ENCODE measurements at regions of chr17 and their contacts with region 1.

Region 1: DNA sequence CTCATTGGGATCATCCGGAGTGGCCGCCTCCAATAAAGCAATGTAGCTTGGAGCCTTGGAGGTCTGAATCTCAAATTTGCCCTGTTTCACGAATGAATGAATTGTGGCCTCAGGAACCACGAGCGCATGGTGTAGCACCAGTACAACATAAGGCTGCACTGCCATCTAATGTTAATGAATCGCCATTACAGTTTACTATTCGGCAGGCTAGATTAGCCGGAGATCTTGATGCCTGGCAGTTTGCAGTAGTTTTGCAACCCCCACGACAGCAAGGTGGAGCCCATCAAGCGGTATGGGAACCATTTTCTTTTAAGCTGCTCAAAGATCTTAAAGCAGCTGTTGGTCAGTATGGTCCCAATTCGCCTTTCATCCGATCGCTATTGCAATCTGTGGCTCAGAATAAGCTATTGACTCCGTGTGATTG is 18.8 kb downstream of the ALOX15B start:
- DNase-seq: peak; percentile 83
- ATAC-seq: peak; percentile 94
- H3K4me3 ChIP-seq: no peak overlapping the region
- H3K27ac ChIP-seq: no peak overlapping the region
- H3K4me1 ChIP-seq: peaks cover 0 to 20% of the 10 kb centered on the region in 2 experiments; a peak in 3 of 4 replicates
- H3K27me3 ChIP-seq: no peaks in the 10 kb centered on the region
- CTCF ChIP-seq: peak; percentile 65 to 89 (median 77)
- POLR2A ChIP-seq: no peak
- RAD21 ChIP-seq: peak; percentile 93

Region 2: GRCh38 chr17:7740481-7741001 is 317.2 kb before region 1 on chr17:
- CTCF ChIA-PET with region 1: interaction called, 5 read pairs
- POLR2A ChIA-PET with region 1: no interaction called
- RAD21 ChIA-PET with region 1: no interaction called
- intact Hi-C with region 1: loop called (anchors 2 kb)
- DNase-seq: no peak
- ATAC-seq: no peak
- H3K4me3 ChIP-seq: no peak overlapping the region
- H3K27ac ChIP-seq: no peak overlapping the region
- H3K4me1 ChIP-seq: peaks cover 4 to 8% of the 10 kb centered on the region in 2 experiments; a peak in 3 of 4 replicates
- H3K27me3 ChIP-seq: no peaks in the 10 kb centered on the region
- CTCF ChIP-seq: no peak
- POLR2A ChIP-seq: no peak
- RAD21 ChIP-seq: no peak

Region 3: DNA sequence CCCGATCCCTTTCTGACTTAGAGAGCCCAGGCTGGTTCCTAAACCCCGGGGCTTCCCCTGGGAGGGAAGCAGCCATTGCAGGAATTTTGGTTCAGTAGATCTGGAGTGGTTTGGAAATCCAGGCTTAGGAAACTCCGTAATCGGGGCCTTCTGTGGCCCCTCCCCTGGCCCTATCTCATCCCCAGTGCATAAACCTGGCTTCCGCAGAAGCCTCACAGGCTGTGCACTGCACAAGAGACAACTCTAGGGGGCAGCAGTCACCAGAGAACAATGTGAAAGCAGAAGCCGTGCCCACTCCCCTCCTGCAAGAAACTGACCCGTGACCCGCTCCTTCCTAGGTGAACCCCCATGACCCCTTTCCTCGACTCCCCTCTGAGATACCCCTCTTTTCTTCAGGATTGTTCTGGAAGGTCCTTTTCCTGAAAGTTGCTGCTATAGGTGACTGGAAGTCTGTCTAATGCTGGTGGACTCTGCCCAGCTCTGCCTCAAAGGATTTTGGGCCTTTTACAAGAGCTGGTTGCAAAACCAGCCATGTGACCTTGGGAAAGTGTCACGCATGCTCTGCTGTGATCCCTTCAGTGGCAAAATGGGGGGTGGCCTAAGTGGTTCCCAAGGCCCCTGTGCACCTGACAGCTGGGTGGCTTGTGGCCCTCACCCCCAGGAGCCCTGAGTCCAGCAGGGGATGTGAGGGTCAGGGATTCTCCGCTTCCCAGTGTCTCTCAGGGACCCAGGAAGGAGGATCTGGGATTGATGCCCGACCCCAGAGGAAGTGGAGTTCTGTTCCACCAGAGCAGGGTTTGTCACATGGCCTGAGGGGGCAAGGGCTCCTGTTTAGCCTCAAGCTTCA is 40.8 kb before region 1 on chr17:
- CTCF ChIA-PET with region 1: interaction called, 19 read pairs
- POLR2A ChIA-PET with region 1: no interaction called
- RAD21 ChIA-PET with region 1: no interaction called
- intact Hi-C with region 1: no loop called
- DNase-seq: no peak
- ATAC-seq: peak; percentile 87
- H3K4me3 ChIP-seq: peak overlapping the region; percentile 50 to 65
- H3K27ac ChIP-seq: peak overlapping the region; percentile 48; the same call in 1 of the 2 replicates
- H3K4me1 ChIP-seq: peaks cover 8 to 45% of the 10 kb centered on the region in 2 experiments; a peak in 3 of 4 replicates
- H3K27me3 ChIP-seq: no peaks in the 10 kb centered on the region
- CTCF ChIP-seq: peak; percentile 74 to 88 (median 86)
- POLR2A ChIP-seq: no peak
- RAD21 ChIP-seq: peak; percentile 80

Region 4: DNA sequence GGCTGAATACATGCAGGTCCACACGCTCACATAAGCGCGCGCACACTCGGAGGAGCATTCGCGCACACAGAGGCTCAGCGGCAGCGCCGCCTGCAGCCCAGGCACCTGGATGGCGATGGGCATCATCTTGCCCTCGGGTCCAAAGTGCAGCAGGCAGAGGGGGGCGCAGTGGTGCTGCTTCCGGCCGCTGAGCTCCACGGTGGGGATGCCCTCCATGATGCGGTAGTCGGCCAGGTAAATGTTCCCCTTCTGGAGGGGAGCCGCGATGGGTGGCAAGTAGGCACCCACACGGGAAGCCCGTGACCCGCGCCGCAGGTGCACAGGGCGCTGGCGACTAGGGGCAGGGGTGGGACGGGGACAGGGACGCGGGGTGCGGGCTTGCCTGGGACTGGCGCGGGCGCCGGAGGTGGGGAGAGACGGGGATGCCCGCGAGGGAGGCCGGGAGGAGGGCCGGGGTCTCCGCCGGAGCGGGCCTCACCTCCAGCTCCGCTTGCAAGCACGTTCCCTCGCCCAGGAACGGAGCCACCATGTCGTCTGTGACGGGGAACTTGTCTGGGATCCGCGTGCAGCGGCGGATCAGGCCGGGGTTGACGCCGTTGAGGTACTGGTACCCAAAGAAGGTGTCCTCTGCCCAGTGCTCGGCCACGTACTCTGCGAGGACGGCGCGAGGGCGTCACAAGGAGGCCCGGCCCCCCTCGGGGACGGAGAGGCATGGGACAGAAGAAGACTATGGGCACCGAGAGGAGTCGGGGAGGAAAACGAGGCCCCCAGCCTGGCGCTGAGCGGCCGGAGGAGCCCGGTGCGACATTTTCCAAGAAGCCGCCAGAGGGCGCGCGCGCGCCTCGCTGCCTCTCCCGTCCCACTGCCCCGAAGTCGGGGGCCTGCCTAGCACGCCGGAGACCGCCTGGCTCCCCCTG is 21.8 kb after region 1 on chr17:
- CTCF ChIA-PET with region 1: interaction called, 29 read pairs
- POLR2A ChIA-PET with region 1: no interaction called
- RAD21 ChIA-PET with region 1: no interaction called
- intact Hi-C with region 1: no loop called
- DNase-seq: peak; percentile 72
- ATAC-seq: peak; percentile 88
- H3K4me3 ChIP-seq: peak overlapping the region; percentile 68 to 81
- H3K27ac ChIP-seq: peak overlapping the region; percentile 79
- H3K4me1 ChIP-seq: peaks cover 2 to 25% of the 10 kb centered on the region in 2 experiments; a peak in 3 of 4 replicates
- H3K27me3 ChIP-seq: no peaks in the 10 kb centered on the region
- CTCF ChIP-seq: peak; percentile 84 to 98 (median 86)
- POLR2A ChIP-seq: no peak
- RAD21 ChIP-seq: peak; percentile 79

Region 5: GRCh38 chr17:8118769-8119580 is 61.3 kb after region 1 on chr17:
- CTCF ChIA-PET with region 1: interaction called, 12 read pairs
- POLR2A ChIA-PET with region 1: no interaction called
- RAD21 ChIA-PET with region 1: no interaction called
- intact Hi-C with region 1: no loop called
- DNase-seq: peak; percentile 65
- ATAC-seq: peak; percentile 61
- H3K4me3 ChIP-seq: peak overlapping the region; percentile 52 to 59
- H3K27ac ChIP-seq: peak overlapping the region; percentile 83
- H3K4me1 ChIP-seq: peaks cover 22 to 66% of the 10 kb centered on the region in 2 experiments
- H3K27me3 ChIP-seq: no peaks in the 10 kb centered on the region
- CTCF ChIP-seq: peak; percentile 65 to 83 (median 79); a peak in 5 of 6 replicates
- POLR2A ChIP-seq: no peak
- RAD21 ChIP-seq: peak; percentile 58

Region 6: GRCh38 chr17:8300627-8301242 is 243.0 kb after region 1 on chr17:
- CTCF ChIA-PET with region 1: interaction called, 6 read pairs
- POLR2A ChIA-PET with region 1: no interaction called
- RAD21 ChIA-PET with region 1: no interaction called
- intact Hi-C with region 1: loop called (anchors 5 kb)
- DNase-seq: peak; percentile 62
- ATAC-seq: peak; percentile 94
- H3K4me3 ChIP-seq: no peak overlapping the region
- H3K27ac ChIP-seq: peak overlapping the region; percentile 27; the same call in 1 of the 2 replicates
- H3K4me1 ChIP-seq: peaks cover 6 to 27% of the 10 kb centered on the region in 2 experiments
- H3K27me3 ChIP-seq: no peaks in the 10 kb centered on the region
- CTCF ChIP-seq: peak; percentile 79 to 87 (median 84)
- POLR2A ChIP-seq: no peak
- RAD21 ChIP-seq: peak; percentile 96

Region 7: DNA sequence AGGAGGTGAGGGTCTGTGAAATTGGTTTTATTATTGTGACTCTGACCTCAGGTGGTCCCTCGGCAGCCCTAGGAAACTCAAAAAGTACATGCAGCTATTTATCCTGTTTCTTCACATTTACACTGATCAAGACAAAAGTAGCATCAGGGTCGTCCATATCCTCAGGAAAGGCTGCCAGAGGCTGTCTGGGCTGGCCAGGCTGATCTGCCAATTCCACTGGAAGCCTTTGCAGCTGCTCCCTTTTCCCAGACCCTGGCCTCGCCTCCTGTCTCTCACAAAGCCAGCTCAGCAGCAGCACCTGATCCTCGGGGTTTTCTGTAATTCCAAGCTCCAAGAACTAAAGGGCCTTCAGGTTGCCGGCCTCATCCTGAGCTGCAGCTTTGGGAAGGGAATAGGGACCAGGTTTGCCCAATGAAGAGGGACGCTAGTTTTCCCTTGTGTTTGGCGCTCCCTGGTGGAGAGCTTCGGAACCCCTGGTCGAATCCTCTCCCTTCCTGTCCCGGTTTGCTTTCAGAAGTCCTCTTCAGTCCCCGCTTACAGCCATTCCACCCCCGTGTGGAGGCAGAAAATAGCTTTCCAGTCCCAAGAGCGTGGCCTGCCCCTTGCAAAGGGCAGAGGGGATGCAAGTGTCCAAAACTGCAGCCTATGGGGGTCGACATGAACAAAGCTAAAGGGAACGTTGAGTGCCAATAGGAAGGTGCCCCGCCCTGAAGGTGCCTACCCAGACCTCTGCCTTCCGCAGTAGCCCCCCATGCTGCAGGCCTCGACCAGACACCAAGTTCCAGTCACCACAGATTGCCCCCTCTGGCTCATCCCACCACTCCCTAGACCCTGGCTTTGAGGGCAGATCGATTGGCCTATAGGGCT is 728.1 kb after region 1 on chr17:
- CTCF ChIA-PET with region 1: interaction called, 15 read pairs
- POLR2A ChIA-PET with region 1: no interaction called
- RAD21 ChIA-PET with region 1: no interaction called
- intact Hi-C with region 1: loop called (anchors 5 kb)
- DNase-seq: peak; percentile 64
- ATAC-seq: peak; percentile 99
- H3K4me3 ChIP-seq: no peak overlapping the region
- H3K27ac ChIP-seq: no peak overlapping the region
- H3K4me1 ChIP-seq: peaks cover 0 to 3% of the 10 kb centered on the region in 2 experiments; a peak in 1 of 4 replicates
- H3K27me3 ChIP-seq: no peaks in the 10 kb centered on the region
- CTCF ChIP-seq: peak; percentile 79 to 93 (median 86)
- POLR2A ChIP-seq: no peak
- RAD21 ChIP-seq: peak; percentile 92